ENCODE measurements at regions of chr2 and their contacts with region 1.

Region 1: GRCh38 chr2:210577263-210578071 is 21.1 kb downstream of the CPS1 start:
- DNase-seq: peak; percentile 72
- ATAC-seq: peak; percentile 70
- H3K4me3 ChIP-seq: no peak overlapping the region
- H3K27ac ChIP-seq: no peak overlapping the region
- H3K4me1 ChIP-seq: no peaks in the 10 kb centered on the region
- H3K27me3 ChIP-seq: no peaks in the 10 kb centered on the region
- CTCF ChIP-seq: peak; percentile 89

Region 2: GRCh38 chr2:210503001-210503623 is 74.4 kb before region 1 on chr2:
- CTCF ChIA-PET with region 1: no interaction called
- POLR2A ChIA-PET with region 1: no interaction called
- intact Hi-C with region 1: loop called (anchors 2 kb)
- DNase-seq: peak; percentile 72
- ATAC-seq: peak; percentile 94
- H3K4me3 ChIP-seq: peak overlapping the region; percentile 52
- H3K27ac ChIP-seq: no peak overlapping the region
- H3K4me1 ChIP-seq: no peaks in the 10 kb centered on the region
- H3K27me3 ChIP-seq: no peaks in the 10 kb centered on the region
- CTCF ChIP-seq: peak; percentile 95

Region 3: DNA sequence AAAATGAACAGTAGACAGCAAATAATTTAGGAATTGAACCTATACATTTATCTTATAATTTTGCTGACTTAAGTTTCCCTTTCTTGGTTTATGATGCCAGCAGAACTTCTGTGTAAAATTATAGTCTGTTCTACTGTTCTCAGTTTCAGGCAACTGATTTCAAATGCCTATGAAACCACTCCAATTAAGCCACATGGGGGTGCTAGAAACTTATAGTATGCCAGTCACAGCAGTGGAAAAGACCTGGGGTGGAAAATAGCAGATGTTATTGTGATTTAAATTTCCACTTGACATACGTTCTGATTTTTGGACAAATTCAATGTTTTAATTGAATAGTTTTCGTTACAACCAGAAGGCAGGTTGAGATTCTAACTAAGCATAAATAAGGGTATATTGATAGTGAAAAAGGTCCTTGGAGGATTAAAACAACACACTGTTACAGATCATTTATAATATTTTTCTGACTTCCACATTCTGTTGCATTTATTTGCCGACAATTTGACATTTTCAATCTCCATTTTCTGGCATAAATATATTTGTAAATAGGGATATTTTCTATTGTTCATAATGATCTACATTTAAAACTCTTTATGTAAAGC is 40.4 kb after region 1 on chr2:
- CTCF ChIA-PET with region 1: no interaction called
- POLR2A ChIA-PET with region 1: no interaction called
- intact Hi-C with region 1: loop called (anchors 1 kb)
- DNase-seq: peak; percentile 64
- ATAC-seq: peak; percentile 81
- H3K4me3 ChIP-seq: no peak overlapping the region
- H3K27ac ChIP-seq: no peak overlapping the region
- H3K4me1 ChIP-seq: no peaks in the 10 kb centered on the region
- H3K27me3 ChIP-seq: no peaks in the 10 kb centered on the region
- CTCF ChIP-seq: peak; percentile 87

Region 4: DNA sequence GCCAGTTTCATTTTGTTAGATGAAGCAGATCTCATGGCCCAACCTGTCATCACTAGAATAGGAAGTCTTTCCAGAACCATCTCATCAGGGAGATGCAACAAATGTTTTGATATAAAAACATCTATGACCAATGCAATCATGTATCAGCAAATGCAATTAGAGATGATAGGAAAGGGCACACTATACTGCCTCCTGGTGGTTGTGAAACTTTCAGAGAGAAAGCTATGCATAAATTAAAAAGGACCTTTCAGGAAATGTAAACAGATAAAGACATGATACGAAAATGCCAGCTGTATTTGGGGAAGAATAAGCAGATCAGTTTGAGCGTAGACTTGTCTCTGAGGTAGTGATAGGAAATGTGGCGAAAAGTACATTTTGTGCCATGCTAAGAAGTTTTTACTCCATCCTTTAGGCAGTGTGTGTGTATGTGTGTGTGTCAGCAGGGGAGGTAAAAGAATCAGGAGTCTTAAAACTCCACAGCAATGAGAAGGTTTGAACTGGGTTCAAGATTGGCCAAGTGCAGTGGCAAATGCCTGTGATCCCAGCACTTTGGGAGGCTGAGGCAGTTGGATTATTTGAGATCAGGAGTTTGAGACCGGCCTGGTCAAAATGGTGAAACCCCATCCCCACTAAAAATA is 458.2 kb after region 1 on chr2:
- CTCF ChIA-PET with region 1: no interaction called
- POLR2A ChIA-PET with region 1: no interaction called
- intact Hi-C with region 1: loop called (anchors 2 kb)
- DNase-seq: peak; percentile 72
- ATAC-seq: peak; percentile 27
- H3K4me3 ChIP-seq: no peak overlapping the region
- H3K27ac ChIP-seq: no peak overlapping the region
- H3K4me1 ChIP-seq: no peaks in the 10 kb centered on the region
- H3K27me3 ChIP-seq: peaks cover 13% of the 10 kb centered on the region; the same call in 1 of the 2 replicates
- CTCF ChIP-seq: peak; percentile 92

Measured in PC-3 (cell line).